ENCODE measurements at regions of chr5 and their contacts with region 1.

Region 1: DNA sequence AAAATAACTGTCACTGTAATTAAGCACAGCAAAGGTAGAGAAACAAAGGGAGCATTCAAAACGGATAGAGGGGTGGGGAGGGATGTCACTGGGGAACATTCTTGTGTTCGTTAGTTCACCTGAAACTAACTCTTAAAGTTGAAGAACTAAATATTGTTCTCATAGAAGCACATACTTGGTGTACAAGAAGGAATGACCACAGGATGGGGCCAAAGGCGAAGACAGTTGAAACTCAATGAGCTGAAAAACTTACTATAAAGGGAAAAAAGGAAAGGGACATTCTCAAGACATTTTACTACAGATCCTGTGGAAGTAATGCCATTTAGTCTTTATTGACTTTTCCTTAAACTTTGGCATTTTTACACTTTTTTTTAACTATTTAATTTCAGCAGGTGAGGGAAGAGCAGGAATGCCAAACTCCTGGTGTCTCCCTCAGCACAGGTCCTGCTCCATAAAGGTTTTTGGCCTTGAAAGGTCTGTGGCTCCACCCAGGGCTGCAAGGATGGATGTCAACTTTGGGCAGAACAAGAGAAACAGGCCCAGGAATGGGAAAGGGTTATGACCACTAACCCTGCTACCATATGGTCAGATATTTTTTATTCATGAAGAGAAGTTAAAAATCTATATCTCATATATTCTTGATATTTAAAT is 197.6 kb upstream of the RASA1 start:
- DNase-seq: peak; percentile 48
- ATAC-seq: peak; percentile 49
- H3K4me3 ChIP-seq: no peak overlapping the region
- H3K4me3 Mint-ChIP-seq: no peak overlapping the region
- H3K27ac ChIP-seq: no peak overlapping the region
- H3K27ac Mint-ChIP-seq: no peak overlapping the region
- H3K4me1 ChIP-seq: peaks cover 19% of the 10 kb centered on the region in 2 donors
- H3K4me1 Mint-ChIP-seq: peaks cover 24% of the 10 kb centered on the region
- H3K27me3 ChIP-seq: no peaks in the 10 kb centered on the region
- H3K27me3 Mint-ChIP-seq: no peaks in the 10 kb centered on the region
- CTCF ChIP-seq: peak; percentile 40

Region 2: DNA sequence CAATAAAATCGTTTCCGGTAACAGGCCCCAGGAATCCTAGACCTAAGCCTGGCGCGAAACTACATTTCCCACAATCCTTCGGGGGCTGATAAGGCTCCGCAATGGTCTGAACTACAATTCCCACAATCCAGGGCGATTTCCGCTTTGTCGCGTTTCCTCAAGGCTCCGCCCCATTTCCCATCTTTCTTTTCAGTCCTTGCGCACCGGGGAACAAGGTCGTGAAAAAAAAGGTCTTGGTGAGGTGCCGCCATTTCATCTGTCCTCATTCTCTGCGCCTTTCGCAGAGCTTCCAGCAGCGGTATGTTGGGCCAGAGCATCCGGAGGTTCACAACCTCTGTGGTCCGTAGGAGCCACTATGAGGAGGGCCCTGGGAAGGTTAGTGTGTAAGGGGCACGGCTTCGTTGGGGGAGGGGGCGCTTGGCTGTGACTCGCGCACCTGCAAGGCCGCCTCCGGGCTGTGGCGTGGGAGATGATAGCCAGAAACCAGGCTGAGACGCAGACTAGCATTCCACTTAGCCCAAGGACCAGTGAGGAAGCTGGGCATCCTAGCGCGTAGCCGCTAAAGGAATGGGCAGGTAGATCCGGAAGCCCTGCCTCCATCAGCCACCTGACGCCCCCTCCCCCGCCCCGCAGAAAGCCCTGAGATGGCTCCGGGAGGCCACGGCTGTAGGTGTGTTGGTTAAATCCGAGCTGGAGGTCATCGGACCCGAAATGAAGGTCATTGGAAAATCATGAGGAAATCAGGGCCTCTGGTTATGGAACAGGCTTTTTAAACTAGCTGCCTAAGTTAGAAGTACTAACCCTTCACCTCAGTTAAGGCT is 452.1 kb before region 1 on chr5 and contains the start of gene COX7C:
- CTCF ChIA-PET with region 1: no interaction called
- POLR2A ChIA-PET with region 1: no interaction called
- intact Hi-C with region 1: loop called (anchors 10 kb)
- DNase-seq: peak; percentile 97
- ATAC-seq: peak; percentile 98
- H3K4me3 ChIP-seq: peak within 1 kb of the TSS; percentile 83 to 99 (median 94)
- H3K4me3 Mint-ChIP-seq: peak within 1 kb of the TSS; percentile 100
- H3K27ac ChIP-seq: peak within 1 kb of the TSS; percentile 90 to 95
- H3K27ac Mint-ChIP-seq: peak within 1 kb of the TSS; percentile 99
- H3K4me1 ChIP-seq: peaks cover 15 to 18% of the 10 kb centered on the region in 2 donors
- H3K4me1 Mint-ChIP-seq: peaks cover 25% of the 10 kb centered on the region
- H3K27me3 ChIP-seq: peaks cover 0 to 15% (median 3%) of the 10 kb centered on the region in 4 experiments
- H3K27me3 Mint-ChIP-seq: peaks cover 16% of the 10 kb centered on the region
- CTCF ChIP-seq: no peak
- total RNA-seq, gene COX7C: 320 and 338 TPM in 2 replicates